Activated CD4-positive, alpha-beta memory T cell treated with anti-CD3 and anti-CD28 coated beads for 36 hours (primary cell): ENCODE measurements at regions of chr6 and their contacts with region 1.

Region 1: GRCh38 chr6:121430514-121431460 is 4.7 kb upstream of the GJA1 start:
- DNase-seq: no peak
- H3K4me3 Mint-ChIP-seq: no peak overlapping the region
- H3K27ac Mint-ChIP-seq: no peak overlapping the region
- H3K4me1 Mint-ChIP-seq: no peaks in the 10 kb centered on the region
- H3K27me3 Mint-ChIP-seq: no peaks in the 10 kb centered on the region

Region 2: GRCh38 chr6:121849477-121849876 is 418.7 kb after region 1 on chr6:
- CTCF ChIA-PET with region 1: no interaction called
- POLR2A ChIA-PET with region 1: no interaction called
- intact Hi-C with region 1: loop called (anchors 5 kb)
- DNase-seq: peak; percentile 12
- H3K4me3 Mint-ChIP-seq: no peak overlapping the region
- H3K27ac Mint-ChIP-seq: no peak overlapping the region
- H3K4me1 Mint-ChIP-seq: no peaks in the 10 kb centered on the region
- H3K27me3 Mint-ChIP-seq: no peaks in the 10 kb centered on the region